ENCODE measurements at regions of chr19 and their contacts with region 1.

Region 1: GRCh38 chr19:49497047-49497788 is 984 bp downstream of the RPS11 start:
- DNase-seq: peak; percentile 54 to 91 (median 78)
- ATAC-seq: peak; percentile 9
- H3K4me3 ChIP-seq: peak overlapping the region; percentile 95 to 96
- H3K4me3 Mint-ChIP-seq: peak overlapping the region; percentile 100
- H3K27ac ChIP-seq: peak overlapping the region; percentile 95 to 98
- H3K27ac Mint-ChIP-seq: peak overlapping the region; percentile 98
- H3K4me1 ChIP-seq: peaks cover 39% of the 10 kb centered on the region
- H3K4me1 Mint-ChIP-seq: peaks cover 59% of the 10 kb centered on the region
- H3K27me3 ChIP-seq: no peaks in the 10 kb centered on the region
- H3K27me3 Mint-ChIP-seq: no peaks in the 10 kb centered on the region
- CTCF ChIP-seq: no peak

Region 2: DNA sequence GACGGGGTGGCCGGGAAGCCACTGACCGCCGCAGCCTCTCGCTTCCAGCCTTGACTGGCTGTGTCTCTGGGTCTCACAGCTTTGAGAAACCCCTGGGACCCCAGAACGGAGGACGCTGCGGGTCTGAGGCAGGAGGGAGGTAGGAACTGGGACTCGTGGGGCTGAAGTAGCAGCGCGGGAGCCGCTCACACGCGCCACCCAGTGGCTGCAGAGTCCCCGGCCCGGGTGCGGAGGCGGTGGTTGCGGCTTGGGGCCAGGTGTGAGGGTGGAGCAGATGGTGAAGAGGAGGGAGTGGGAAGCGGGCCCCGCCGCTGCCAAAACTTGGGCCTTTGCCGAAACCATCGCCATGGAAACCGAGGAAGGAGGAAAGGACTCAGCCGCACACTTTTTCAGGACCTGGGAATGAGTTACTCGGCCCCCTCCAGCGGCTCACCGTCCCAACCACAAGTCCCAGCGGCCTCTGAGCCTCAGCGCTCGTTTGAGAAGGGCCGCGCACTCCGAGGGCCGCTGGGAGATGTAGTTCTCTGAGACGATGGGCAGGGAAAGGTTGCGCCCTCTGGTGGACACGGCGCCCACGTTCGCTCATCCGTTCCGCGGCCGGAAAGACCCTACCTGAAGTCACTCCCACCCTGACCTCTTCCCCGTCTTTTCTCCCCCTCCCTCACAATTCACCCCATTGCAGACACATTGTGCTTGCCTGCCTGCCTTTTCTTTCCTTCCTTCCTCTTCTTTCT is 53.7 kb before region 1 on chr19:
- CTCF ChIA-PET with region 1: no interaction called
- POLR2A ChIA-PET with region 1: no interaction called
- intact Hi-C with region 1: loop called in 1 of 2 experiments (anchors 2 kb)
- DNase-seq: peak; percentile 86 to 97 (median 94)
- ATAC-seq: peak; percentile 88
- H3K4me3 ChIP-seq: peak overlapping the region; percentile 57 to 76
- H3K4me3 Mint-ChIP-seq: peak overlapping the region; percentile 79
- H3K27ac ChIP-seq: peak overlapping the region; percentile 48 to 66
- H3K27ac Mint-ChIP-seq: peak overlapping the region; percentile 71
- H3K4me1 ChIP-seq: peaks cover 25% of the 10 kb centered on the region
- H3K4me1 Mint-ChIP-seq: peaks cover 37% of the 10 kb centered on the region
- H3K27me3 ChIP-seq: peaks cover 37 to 40% of the 10 kb centered on the region in 2 experiments
- H3K27me3 Mint-ChIP-seq: peaks cover 36% of the 10 kb centered on the region
- CTCF ChIP-seq: peak; percentile 74

Region 3: GRCh38 chr19:49473868-49474544 is 23.2 kb before region 1 on chr19 and contains the start of gene FLT3LG:
- CTCF ChIA-PET with region 1: interaction called, 10 read pairs
- POLR2A ChIA-PET with region 1: interaction called, 16 read pairs
- intact Hi-C with region 1: loop called in 1 of 2 experiments (anchors 1 kb)
- DNase-seq: peak; percentile 83 to 97 (median 91)
- ATAC-seq: peak; percentile 58
- H3K4me3 ChIP-seq: peak within 1 kb of the TSS; percentile 88 to 98
- H3K4me3 Mint-ChIP-seq: peak within 1 kb of the TSS; percentile 91
- H3K27ac ChIP-seq: peak within 1 kb of the TSS; percentile 92 to 96
- H3K27ac Mint-ChIP-seq: peak within 1 kb of the TSS; percentile 98
- H3K4me1 ChIP-seq: peaks cover 53% of the 10 kb centered on the region
- H3K4me1 Mint-ChIP-seq: peaks cover 54% of the 10 kb centered on the region
- H3K27me3 ChIP-seq: no peaks in the 10 kb centered on the region
- H3K27me3 Mint-ChIP-seq: no peaks in the 10 kb centered on the region
- CTCF ChIP-seq: peak; percentile 83
- total RNA-seq, gene FLT3LG: 246 to 259 TPM

Region 4: GRCh38 chr19:49590071-49590970 is 93.1 kb after region 1 on chr19:
- CTCF ChIA-PET with region 1: no interaction called
- POLR2A ChIA-PET with region 1: interaction called, 5 read pairs
- intact Hi-C with region 1: loop called in 1 of 2 experiments (anchors 1 kb)
- DNase-seq: peak; percentile 90 to 98 (median 94)
- ATAC-seq: peak; percentile 77
- H3K4me3 ChIP-seq: peak overlapping the region; percentile 78 to 97
- H3K4me3 Mint-ChIP-seq: peak overlapping the region; percentile 91
- H3K27ac ChIP-seq: peak overlapping the region; percentile 82 to 83
- H3K27ac Mint-ChIP-seq: peak overlapping the region; percentile 91
- H3K4me1 ChIP-seq: peaks cover 23% of the 10 kb centered on the region
- H3K4me1 Mint-ChIP-seq: peaks cover 36% of the 10 kb centered on the region
- H3K27me3 ChIP-seq: no peaks in the 10 kb centered on the region
- H3K27me3 Mint-ChIP-seq: no peaks in the 10 kb centered on the region
- CTCF ChIP-seq: peak; percentile 29

Region 5: GRCh38 chr19:49665351-49666119 is 168.3 kb after region 1 on chr19 and contains the starts of genes BCL2L12 and IRF3:
- CTCF ChIA-PET with region 1: interaction called, 68 read pairs
- POLR2A ChIA-PET with region 1: interaction called, 4 read pairs
- intact Hi-C with region 1: loop called in 1 of 2 experiments (anchors 1 kb)
- DNase-seq: peak; percentile 98 to 100 (median 99)
- ATAC-seq: peak; percentile 80
- H3K4me3 ChIP-seq: peak within 1 kb of the TSS; percentile 86 to 95
- H3K4me3 Mint-ChIP-seq: peak within 1 kb of the TSS; percentile 99
- H3K27ac ChIP-seq: peak within 1 kb of the TSS; percentile 77 to 93
- H3K27ac Mint-ChIP-seq: peak within 1 kb of the TSS; percentile 99
- H3K4me1 ChIP-seq: peaks cover 29% of the 10 kb centered on the region
- H3K4me1 Mint-ChIP-seq: peaks cover 38% of the 10 kb centered on the region
- H3K27me3 ChIP-seq: no peaks in the 10 kb centered on the region
- H3K27me3 Mint-ChIP-seq: no peaks in the 10 kb centered on the region
- CTCF ChIP-seq: no peak
- total RNA-seq, gene BCL2L12: 13.1 to 14.7 TPM
- total RNA-seq, gene IRF3: 92.0 to 99.5 TPM

Region 6: DNA sequence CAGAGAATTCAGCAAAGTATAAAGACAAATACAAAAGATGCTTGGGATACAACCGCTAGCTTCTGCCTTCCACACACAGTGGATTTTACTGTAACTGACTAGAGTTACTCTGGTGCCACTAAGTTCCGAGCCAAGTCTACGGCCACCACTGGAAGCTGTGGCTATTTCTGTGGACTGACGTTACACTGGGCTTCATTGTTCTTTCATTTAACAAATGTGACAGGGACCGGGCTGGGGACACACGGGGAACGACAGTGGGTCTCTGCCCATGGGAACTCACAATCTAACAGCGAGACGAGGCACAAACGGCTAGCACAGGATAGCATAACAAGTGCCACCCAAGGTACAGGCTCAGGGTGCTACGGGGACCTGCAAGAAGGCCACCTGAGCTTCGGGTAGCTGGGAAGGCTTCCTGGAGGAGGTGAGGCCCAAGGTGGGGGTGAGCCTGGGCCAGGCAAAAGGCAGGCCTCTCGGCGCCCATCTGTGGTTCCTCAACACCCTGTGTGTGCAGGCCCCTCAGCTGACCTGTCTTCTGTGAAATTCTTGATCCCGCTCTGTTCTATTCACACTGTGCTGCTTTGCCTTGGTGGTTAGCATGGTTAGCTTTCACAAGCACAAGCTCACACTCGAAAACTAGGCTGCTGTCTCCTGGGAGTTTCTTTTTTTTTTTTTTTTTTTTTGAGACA is 409.8 kb after region 1 on chr19:
- CTCF ChIA-PET with region 1: no interaction called
- POLR2A ChIA-PET with region 1: no interaction called
- intact Hi-C with region 1: no loop called
- DNase-seq: no peak
- ATAC-seq: no peak
- H3K4me3 ChIP-seq: no peak overlapping the region
- H3K4me3 Mint-ChIP-seq: no peak overlapping the region
- H3K27ac ChIP-seq: no peak overlapping the region
- H3K27ac Mint-ChIP-seq: no peak overlapping the region
- H3K4me1 ChIP-seq: no peaks in the 10 kb centered on the region
- H3K4me1 Mint-ChIP-seq: peaks cover 9% of the 10 kb centered on the region
- H3K27me3 ChIP-seq: no peaks in the 10 kb centered on the region
- H3K27me3 Mint-ChIP-seq: no peaks in the 10 kb centered on the region
- CTCF ChIP-seq: no peak

Measured in CD8-positive, alpha-beta T cell (primary cell).